A673 (cell line): ENCODE measurements at regions of chr3 and their contacts with region 1.

Region 1: DNA sequence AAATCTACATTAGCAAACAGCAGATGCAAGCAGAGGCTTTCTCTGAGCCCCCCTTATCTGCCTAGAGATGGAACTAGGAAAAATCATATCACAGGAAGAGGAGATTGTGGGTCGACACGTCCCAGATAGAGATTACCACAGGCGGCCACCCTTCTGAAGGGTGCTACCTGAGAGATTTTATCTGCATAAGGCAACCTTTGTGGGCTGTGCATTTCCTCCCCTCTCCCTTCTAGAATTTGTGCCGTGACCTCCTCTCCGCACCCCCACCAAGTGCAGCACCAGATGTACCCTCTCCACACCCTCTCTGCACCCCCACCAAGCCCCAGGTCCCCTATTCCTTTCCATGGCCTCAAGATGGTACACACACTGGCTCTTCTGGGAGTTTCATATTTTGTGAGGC is 27.4 kb downstream of the METTL6 start:
- DNase-seq: no peak
- H3K4me3 ChIP-seq: no peak overlapping the region
- H3K27ac ChIP-seq: no peak overlapping the region
- H3K4me1 ChIP-seq: no peaks in the 10 kb centered on the region
- H3K27me3 ChIP-seq: no peaks in the 10 kb centered on the region
- CTCF ChIP-seq: no peak

Region 2: GRCh38 chr3:15215996-15216395 is 184.0 kb before region 1 on chr3:
- CTCF ChIA-PET with region 1: no interaction called
- POLR2A ChIA-PET with region 1: interaction called, 22 read pairs
- intact Hi-C with region 1: no loop called
- DNase-seq: no peak
- H3K4me3 ChIP-seq: no peak overlapping the region
- H3K27ac ChIP-seq: no peak overlapping the region
- H3K4me1 ChIP-seq: no peaks in the 10 kb centered on the region
- H3K27me3 ChIP-seq: no peaks in the 10 kb centered on the region
- CTCF ChIP-seq: no peak

Region 3: GRCh38 chr3:15743587-15744009 is 343.6 kb after region 1 on chr3:
- CTCF ChIA-PET with region 1: no interaction called
- POLR2A ChIA-PET with region 1: no interaction called
- intact Hi-C with region 1: no loop called
- DNase-seq: no peak
- H3K4me3 ChIP-seq: no peak overlapping the region
- H3K27ac ChIP-seq: no peak overlapping the region
- H3K4me1 ChIP-seq: no peaks in the 10 kb centered on the region
- H3K27me3 ChIP-seq: no peaks in the 10 kb centered on the region
- CTCF ChIP-seq: no peak